ENCODE measurements at regions of chr2 and their contacts with region 1.

Region 1: GRCh38 chr2:49255409-49255971 is 101.2 kb upstream of the FSHR start:
- DNase-seq: no peak
- H3K4me3 ChIP-seq: no peak overlapping the region
- H3K27ac ChIP-seq: no peak overlapping the region
- H3K4me1 ChIP-seq: no peaks in the 10 kb centered on the region
- H3K27me3 ChIP-seq: peaks cover 2% of the 10 kb centered on the region
- CTCF ChIP-seq: peak in 1 of 2 donors; percentile 1

Region 2: GRCh38 chr2:49490710-49491109 is 235.2 kb after region 1 on chr2:
- CTCF ChIA-PET with region 1: no interaction called
- dilution Hi-C with region 1: no loop called
- in situ Hi-C with region 1: no loop called
- intact Hi-C with region 1: loop called (anchors 2 kb)
- DNase-seq: peak; percentile 35
- H3K4me3 ChIP-seq: no peak overlapping the region
- H3K27ac ChIP-seq: no peak overlapping the region
- H3K4me1 ChIP-seq: no peaks in the 10 kb centered on the region
- H3K27me3 ChIP-seq: no peaks in the 10 kb centered on the region
- CTCF ChIP-seq: peak; percentile 65 to 84